Activated CD4-positive, alpha-beta T cell treated with anti-CD3 and anti-CD28 coated beads, Interleukin-2, amount 10 ng/mL, durations not matched to agents 7 days and 5 days (primary cell): ENCODE measurements at regions of chr12 and their contacts with region 1.

Region 1: DNA sequence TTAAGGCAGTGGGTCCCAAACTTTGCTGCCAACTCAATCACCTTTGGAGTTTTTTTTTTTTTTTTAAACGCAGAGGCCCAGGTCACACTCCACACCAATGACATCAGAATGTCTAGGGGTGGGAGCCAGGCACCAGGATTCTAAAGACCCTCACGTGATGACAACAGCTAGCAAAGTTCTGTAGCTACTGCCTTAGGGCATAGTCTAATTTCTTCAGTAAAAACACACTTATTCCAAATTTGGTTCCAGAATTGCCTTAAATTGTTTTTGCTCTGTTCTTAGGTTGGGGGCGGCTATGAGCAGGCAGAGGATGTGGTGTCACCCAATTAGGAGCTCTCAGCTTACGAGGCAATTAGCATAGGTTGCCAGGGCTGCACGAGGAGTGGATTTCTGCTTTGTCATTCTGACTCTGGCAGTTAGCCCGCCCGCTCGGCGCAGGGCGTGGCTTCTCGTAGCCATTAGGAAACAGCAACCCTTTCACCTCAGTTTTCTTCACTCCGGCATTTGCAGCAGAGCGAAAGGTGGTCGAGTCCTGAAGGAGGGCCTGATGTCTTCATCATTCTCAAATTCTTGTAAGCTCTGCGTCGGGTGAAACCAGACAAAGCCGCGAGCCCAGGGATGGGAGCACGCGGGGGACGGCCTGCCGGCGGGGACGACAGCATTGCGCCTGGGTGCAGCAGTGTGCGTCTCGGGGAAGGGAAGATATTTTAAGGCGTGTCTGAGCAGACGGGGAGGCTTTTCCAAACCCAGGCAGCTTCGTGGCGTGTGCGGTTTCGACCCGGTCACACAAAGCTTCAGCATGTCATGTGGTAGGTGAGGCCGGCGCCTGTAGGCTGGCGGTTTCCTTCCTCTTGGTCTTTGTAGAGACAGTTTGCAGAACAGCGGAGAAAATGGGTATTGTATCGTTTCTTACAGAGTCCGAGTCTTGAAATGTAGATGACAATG is 16.7 kb upstream of the EID3 start:
- DNase-seq: peak; percentile 95
- H3K4me3 Mint-ChIP-seq: peak overlapping the region; percentile 94
- H3K27ac Mint-ChIP-seq: peak overlapping the region; percentile 97
- H3K4me1 Mint-ChIP-seq: peaks cover 26% of the 10 kb centered on the region
- H3K27me3 Mint-ChIP-seq: no peaks in the 10 kb centered on the region

Region 2: DNA sequence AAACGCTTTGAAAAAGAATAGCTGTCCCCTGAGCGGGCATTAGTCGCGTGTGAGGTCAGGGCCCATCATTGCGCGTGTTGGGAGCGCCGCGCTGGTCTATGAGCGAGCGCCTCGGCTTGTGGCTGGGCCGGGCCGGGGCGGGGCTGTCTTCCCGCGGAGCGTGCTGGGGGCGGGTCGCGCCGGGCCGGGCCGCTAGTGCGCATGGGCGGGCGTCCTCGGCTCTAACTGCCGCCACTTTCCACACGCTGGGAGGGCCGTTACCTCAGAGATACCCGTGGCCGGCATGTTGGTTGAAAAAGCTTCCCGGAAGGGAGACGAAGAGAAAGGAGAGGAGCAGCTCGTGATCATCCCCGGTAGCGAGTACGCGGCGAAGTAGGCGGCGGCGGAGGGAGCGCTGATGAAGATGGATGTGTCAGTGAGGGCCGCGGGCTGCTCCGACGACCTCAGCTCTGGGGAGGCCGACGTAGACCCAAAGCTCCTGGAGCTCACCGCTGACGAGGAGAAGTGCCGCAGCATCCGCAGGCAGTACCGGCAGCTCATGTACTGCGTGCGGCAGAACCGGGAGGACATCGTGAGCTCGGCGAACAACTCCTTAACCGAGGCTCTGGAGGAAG is 16.8 kb after region 1 on chr12 and contains the start of gene EID3:
- CTCF ChIA-PET with region 1: interaction called, 16 read pairs
- POLR2A ChIA-PET with region 1: interaction called, 4 read pairs
- DNase-seq: peak; percentile 91
- H3K4me3 Mint-ChIP-seq: peak within 1 kb of the TSS; percentile 86
- H3K27ac Mint-ChIP-seq: peak within 1 kb of the TSS; percentile 98
- H3K4me1 Mint-ChIP-seq: peaks cover 81% of the 10 kb centered on the region
- H3K27me3 Mint-ChIP-seq: no peaks in the 10 kb centered on the region
- total RNA-seq, gene EID3: 5.8 to 6.9 TPM